ENCODE measurements at regions of chr3 and their contacts with region 1.

Region 1: GRCh38 chr3:172094621-172095557 is 55.5 kb downstream of the FNDC3B start:
- DNase-seq: no peak
- ATAC-seq: peak in 4 of 8 donors; percentile 18 to 29 (median 20)
- H3K4me3 ChIP-seq: no peak overlapping the region
- H3K27ac ChIP-seq: peak overlapping the region in 8 of 10 donors; percentile 5 to 83 (median 56)
- H3K4me1 ChIP-seq: peaks cover 2 to 77% (median 64%) of the 10 kb centered on the region in 9 donors
- H3K27me3 ChIP-seq: no peaks in the 10 kb centered on the region
- CTCF ChIP-seq: no peak

Region 2: DNA sequence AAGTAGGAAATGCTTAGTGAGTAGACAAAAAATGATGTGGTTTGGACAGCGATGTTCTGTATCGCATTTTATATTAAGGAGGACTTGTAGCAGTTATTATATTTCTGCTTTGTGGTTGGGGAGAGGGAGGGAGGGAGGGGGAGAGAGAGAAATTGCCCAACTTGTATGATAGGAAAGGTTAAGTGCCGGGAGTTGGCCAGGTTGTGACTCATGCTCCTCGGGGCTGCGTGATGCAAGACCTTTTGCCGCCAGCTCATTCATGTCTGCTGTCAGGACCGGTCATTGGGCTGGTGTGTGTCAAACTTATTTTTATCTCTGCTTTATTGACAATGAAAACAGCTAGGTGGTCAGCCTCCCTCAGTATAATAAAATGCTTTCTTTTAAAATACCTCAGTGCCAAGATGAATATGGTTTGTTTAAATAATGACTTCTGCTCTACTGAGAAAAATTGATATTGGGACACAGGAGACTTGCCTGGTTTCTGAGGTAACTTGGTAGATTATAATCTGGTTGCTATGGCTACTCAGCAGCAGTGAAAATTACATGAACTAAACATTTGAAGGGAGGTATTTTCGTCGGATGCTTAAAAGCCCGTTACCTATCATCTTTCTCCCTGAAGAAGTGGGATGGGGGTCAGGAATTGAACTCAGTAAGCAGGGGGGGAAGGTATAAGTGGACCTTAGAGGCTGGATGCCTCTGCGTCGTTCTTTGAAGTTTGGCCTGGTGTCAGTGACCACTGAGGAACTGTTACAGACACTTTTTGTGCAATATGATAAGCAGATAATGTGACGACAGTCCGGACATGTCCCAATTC is 35.2 kb after region 1 on chr3:
- intact Hi-C with region 1: loop called in 1 of 10 experiments (anchors 5 kb)
- DNase-seq: peak; percentile 84 to 88
- ATAC-seq: peak; percentile 85 to 96 (median 90)
- H3K4me3 ChIP-seq: no peak overlapping the region
- H3K27ac ChIP-seq: peak overlapping the region; percentile 19 to 88 (median 72)
- H3K4me1 ChIP-seq: peaks cover 22 to 100% (median 63%) of the 10 kb centered on the region in 9 donors
- H3K27me3 ChIP-seq: no peaks in the 10 kb centered on the region
- CTCF ChIP-seq: no peak